MCF 10A (cell line): ENCODE measurements at regions of chr13 and their contacts with region 1.

Region 1: DNA sequence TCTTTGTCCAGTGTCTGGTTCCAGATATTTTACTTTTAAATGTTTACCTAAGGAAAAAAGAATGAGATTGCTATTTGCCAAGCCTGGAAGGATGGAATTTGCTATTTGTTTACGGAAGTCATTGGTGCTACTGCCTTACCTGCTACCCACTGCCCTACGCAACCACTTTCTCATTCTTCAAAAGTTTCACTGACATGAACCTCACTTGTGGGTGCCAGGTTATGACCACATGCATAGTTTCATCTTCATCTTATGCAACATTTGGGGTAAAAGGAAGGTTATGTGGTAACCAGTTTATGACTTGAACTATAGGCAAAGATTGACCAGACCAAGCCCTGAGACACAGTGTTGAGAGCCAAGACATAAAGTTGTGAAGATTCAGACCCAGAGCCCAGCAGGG is 142.5 kb downstream of the LACC1 start:
- DNase-seq: peak; percentile 65
- H3K4me3 Mint-ChIP-seq: no peak overlapping the region
- H3K27ac Mint-ChIP-seq: no peak overlapping the region
- H3K4me1 Mint-ChIP-seq: no peaks in the 10 kb centered on the region
- H3K27me3 Mint-ChIP-seq: no peaks in the 10 kb centered on the region
- CTCF ChIP-seq: no peak

Region 2: DNA sequence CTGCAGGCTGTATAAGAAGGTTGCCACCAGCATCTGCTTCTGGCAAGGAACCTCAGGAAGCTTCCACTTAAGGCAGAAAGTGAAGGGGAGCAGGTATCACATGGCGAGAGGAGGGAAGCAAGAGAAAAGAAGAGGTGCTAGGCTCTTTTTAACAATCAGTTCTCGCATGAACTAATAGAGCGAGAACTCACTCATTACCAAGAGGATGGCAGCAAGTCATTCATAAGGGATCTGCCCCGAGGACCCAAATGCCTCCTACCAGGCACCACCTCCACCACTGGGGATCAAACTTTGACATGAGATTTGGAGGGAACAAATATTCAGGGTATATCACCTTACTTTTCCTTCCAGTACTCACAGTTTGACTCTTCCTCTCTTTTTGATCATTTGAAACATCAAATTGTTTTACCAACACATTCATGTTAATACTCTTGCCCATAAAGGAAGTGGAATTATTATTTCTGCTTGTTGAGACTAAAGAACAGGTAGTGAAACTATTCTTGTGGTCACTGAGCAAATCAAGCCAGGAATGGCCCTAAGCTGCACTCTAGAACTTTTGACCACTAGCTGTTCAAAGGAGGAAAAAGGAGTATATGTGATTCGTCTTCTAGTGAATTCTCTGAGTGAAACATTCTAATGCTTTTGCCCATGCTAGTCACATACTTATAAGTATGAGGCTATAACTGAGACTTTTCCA is 97.5 kb before region 1 on chr13:
- CTCF ChIA-PET with region 1: no interaction called
- POLR2A ChIA-PET with region 1: no interaction called
- intact Hi-C with region 1: loop called (anchors 10 kb)
- DNase-seq: no peak
- H3K4me3 Mint-ChIP-seq: no peak overlapping the region
- H3K27ac Mint-ChIP-seq: no peak overlapping the region
- H3K4me1 Mint-ChIP-seq: no peaks in the 10 kb centered on the region
- H3K27me3 Mint-ChIP-seq: no peaks in the 10 kb centered on the region
- CTCF ChIP-seq: no peak